WTC11 (cell line): ENCODE measurements at regions of chr1 and their contacts with region 1.

Region 1: GRCh38 chr1:18902523-18903290 is at the start of gene ALDH4A1:
- DNase-seq: peak; percentile 96
- ATAC-seq: peak; percentile 95
- H3K4me3 Mint-ChIP-seq: peak within 1 kb of the TSS; percentile 98
- H3K27ac Mint-ChIP-seq: peak within 1 kb of the TSS; percentile 99
- H3K4me1 Mint-ChIP-seq: peaks cover 17% of the 10 kb centered on the region
- H3K27me3 Mint-ChIP-seq: no peaks in the 10 kb centered on the region; the same call in none of the 2 replicates
- CTCF ChIP-seq: no peak
- total RNA-seq, gene ALDH4A1: 31.0 to 37.5 TPM (median 36.2 TPM) in 3 replicates

Region 2: GRCh38 chr1:18875107-18875795 is 27.5 kb before region 1 on chr1:
- CTCF ChIA-PET with region 1: interaction called, 11 read pairs
- POLR2A ChIA-PET with region 1: no interaction called
- DNase-seq: peak; percentile 95
- ATAC-seq: peak; percentile 89
- H3K4me3 Mint-ChIP-seq: no peak overlapping the region
- H3K27ac Mint-ChIP-seq: no peak overlapping the region
- H3K4me1 Mint-ChIP-seq: no peaks in the 10 kb centered on the region; the same call in 1 of the 2 replicates
- H3K27me3 Mint-ChIP-seq: no peaks in the 10 kb centered on the region
- CTCF ChIP-seq: peak; percentile 93

Region 3: GRCh38 chr1:18913065-18913835 is 10.5 kb after region 1 on chr1:
- CTCF ChIA-PET with region 1: interaction called, 70 read pairs
- POLR2A ChIA-PET with region 1: no interaction called
- DNase-seq: peak; percentile 94
- ATAC-seq: peak; percentile 95
- H3K4me3 Mint-ChIP-seq: no peak overlapping the region
- H3K27ac Mint-ChIP-seq: no peak overlapping the region
- H3K4me1 Mint-ChIP-seq: peaks cover 5% of the 10 kb centered on the region
- H3K27me3 Mint-ChIP-seq: no peaks in the 10 kb centered on the region
- CTCF ChIP-seq: peak; percentile 94

Region 4: DNA sequence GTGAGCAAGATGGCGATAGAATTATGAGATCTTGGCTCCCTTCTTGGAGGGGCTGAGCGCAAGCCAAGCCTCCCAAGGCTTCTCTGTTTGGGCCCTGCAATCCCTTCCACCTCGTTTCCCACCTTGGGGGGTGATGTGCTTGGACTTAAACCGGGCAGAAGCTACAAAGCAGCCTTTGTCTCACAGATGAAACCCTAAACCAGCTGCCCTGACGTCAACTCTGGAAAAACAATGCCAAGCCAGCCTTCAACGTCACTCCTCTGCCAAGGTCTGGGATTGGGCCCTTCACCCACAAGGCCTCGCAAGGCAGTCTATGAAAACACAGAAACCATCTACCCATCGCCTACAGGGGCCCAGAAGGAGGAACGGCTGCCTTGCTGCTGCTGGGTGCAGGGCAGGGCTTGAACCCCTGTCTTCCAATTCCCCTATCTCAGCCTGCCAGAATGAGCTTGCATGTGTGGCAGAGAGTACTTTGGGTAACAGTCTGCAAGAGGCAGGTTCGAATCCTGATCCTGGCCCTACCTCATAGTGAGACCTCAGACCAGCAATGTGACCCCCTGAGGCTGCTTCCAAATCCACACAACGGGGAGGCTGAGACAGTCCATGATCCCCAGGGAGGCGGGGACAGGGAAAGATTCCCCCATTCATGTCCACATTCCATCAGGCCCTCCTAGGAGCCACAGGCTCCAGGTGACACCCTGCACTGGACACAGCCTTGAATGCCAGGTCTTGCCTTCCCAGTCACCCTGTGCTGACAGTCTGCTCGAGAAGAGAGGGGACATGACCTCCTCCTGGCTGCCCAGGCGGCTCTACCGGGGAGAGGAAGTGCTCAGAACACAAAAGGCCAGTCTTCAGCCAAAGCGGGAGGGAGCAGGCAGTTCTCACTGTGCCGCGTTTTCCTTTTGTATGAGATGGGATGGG is 38.8 kb after region 1 on chr1:
- CTCF ChIA-PET with region 1: interaction called, 24 read pairs
- POLR2A ChIA-PET with region 1: no interaction called
- DNase-seq: no peak
- ATAC-seq: peak; percentile 36
- H3K4me3 Mint-ChIP-seq: peak overlapping the region; percentile 4; the same call in 1 of the 2 replicates
- H3K27ac Mint-ChIP-seq: peak overlapping the region; percentile 73
- H3K4me1 Mint-ChIP-seq: peaks cover 50% of the 10 kb centered on the region
- H3K27me3 Mint-ChIP-seq: no peaks in the 10 kb centered on the region
- CTCF ChIP-seq: no peak

Region 5: DNA sequence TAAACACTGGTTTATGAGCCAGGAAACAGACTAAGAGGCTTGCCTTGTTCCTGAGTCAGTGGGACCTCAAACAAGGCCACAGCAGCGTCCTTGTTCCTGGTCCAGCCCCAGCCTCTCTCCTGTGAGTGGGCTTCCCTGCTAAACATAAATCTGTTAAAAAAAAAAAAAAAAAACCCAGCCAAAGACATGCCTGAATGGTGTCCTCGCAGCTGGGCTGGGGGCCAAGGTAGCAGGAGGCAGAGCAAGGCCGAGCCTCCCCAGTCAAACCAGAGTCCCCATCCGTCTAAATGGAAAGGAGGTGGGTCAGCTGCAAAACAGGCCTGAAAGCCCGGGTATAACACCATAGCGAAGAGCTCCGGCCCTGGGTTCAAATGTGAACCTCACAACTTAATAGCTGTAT is 71.9 kb after region 1 on chr1:
- CTCF ChIA-PET with region 1: interaction called, 10 read pairs
- POLR2A ChIA-PET with region 1: no interaction called
- DNase-seq: no peak
- ATAC-seq: no peak
- H3K4me3 Mint-ChIP-seq: no peak overlapping the region
- H3K27ac Mint-ChIP-seq: no peak overlapping the region
- H3K4me1 Mint-ChIP-seq: no peaks in the 10 kb centered on the region
- H3K27me3 Mint-ChIP-seq: peaks cover 4% of the 10 kb centered on the region; the same call in 1 of the 2 replicates
- CTCF ChIP-seq: no peak

Region 6: DNA sequence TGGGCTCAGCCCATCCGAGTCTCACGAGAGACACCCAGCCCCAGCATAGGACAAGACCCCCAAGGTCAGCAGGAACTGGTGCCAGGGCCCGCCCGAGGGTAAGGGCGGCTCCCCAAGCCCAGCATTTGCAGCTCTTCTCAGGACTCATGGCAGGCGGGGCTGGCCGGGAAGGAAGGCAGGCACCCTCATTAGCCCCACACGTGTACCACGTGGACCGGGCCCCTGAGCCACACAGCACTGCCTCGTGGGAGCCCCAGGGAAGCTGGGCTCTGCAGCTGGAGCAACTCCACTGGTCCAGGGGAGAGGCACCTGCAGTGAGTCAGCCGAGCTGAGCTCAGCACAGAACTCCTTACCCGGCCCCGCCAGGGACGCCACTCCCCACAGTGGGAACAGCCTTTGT is 151.5 kb after region 1 on chr1:
- CTCF ChIA-PET with region 1: interaction called, 13 read pairs
- POLR2A ChIA-PET with region 1: no interaction called
- DNase-seq: no peak
- ATAC-seq: no peak
- H3K4me3 Mint-ChIP-seq: no peak overlapping the region
- H3K27ac Mint-ChIP-seq: no peak overlapping the region
- H3K4me1 Mint-ChIP-seq: 0 out of 2 replicates have a peak, but pooled peaks cover 12% of the 10 kb centered on the region
- H3K27me3 Mint-ChIP-seq: no peaks in the 10 kb centered on the region
- CTCF ChIP-seq: no peak

Region 7: GRCh38 chr1:19361611-19362147 is 459.0 kb after region 1 on chr1:
- CTCF ChIA-PET with region 1: no interaction called
- POLR2A ChIA-PET with region 1: no interaction called
- DNase-seq: no peak
- ATAC-seq: no peak
- H3K4me3 Mint-ChIP-seq: no peak overlapping the region
- H3K27ac Mint-ChIP-seq: no peak overlapping the region
- H3K4me1 Mint-ChIP-seq: peaks cover 10% of the 10 kb centered on the region
- H3K27me3 Mint-ChIP-seq: no peaks in the 10 kb centered on the region
- CTCF ChIP-seq: no peak